ENCODE measurements at regions of chr13 and their contacts with region 1.

Region 1: GRCh38 chr13:112510002-112510780 is 77.8 kb downstream of the TUBGCP3 start:
- DNase-seq: peak; percentile 53 to 54
- H3K4me3 ChIP-seq: no peak overlapping the region
- H3K27ac ChIP-seq: 0 out of 2 replicates have a peak overlapping the region, but pooled peaks have one; percentile 8
- H3K4me1 ChIP-seq: no peaks in the 10 kb centered on the region
- H3K27me3 ChIP-seq: no peaks in the 10 kb centered on the region
- CTCF ChIP-seq: peak; percentile 51 to 88 (median 80)
- EP300 ChIP-seq: no peak
- POLR2A ChIP-seq: no peak
- RAD21 ChIP-seq: peak; percentile 79 to 89

Region 2: GRCh38 chr13:112522578-112522977 is 12.4 kb after region 1 on chr13:
- CTCF ChIA-PET with region 1: interaction called, 15 read pairs
- POLR2A ChIA-PET with region 1: interaction called, 4 read pairs
- DNase-seq: peak in 1 of 2 experiments; percentile 3
- H3K4me3 ChIP-seq: no peak overlapping the region
- H3K27ac ChIP-seq: no peak overlapping the region
- H3K4me1 ChIP-seq: no peaks in the 10 kb centered on the region
- H3K27me3 ChIP-seq: no peaks in the 10 kb centered on the region
- CTCF ChIP-seq: no peak
- EP300 ChIP-seq: no peak
- POLR2A ChIP-seq: no peak
- RAD21 ChIP-seq: no peak

Region 3: GRCh38 chr13:112790735-112791641 is 280.8 kb after region 1 on chr13:
- CTCF ChIA-PET with region 1: no interaction called
- POLR2A ChIA-PET with region 1: no interaction called
- DNase-seq: peak in 1 of 2 experiments; percentile 39
- H3K4me3 ChIP-seq: no peak overlapping the region
- H3K27ac ChIP-seq: no peak overlapping the region
- H3K4me1 ChIP-seq: peaks cover 5 to 8% (median 7%) of the 10 kb centered on the region in 4 experiments
- H3K27me3 ChIP-seq: no peaks in the 10 kb centered on the region
- CTCF ChIP-seq: no peak
- EP300 ChIP-seq: no peak
- POLR2A ChIP-seq: no peak
- RAD21 ChIP-seq: no peak